ENCODE measurements at regions of chr10 and their contacts with region 1.

Region 1: GRCh38 chr10:119478111-119478802 is 64.3 kb downstream of the RGS10 start:
- DNase-seq: peak; percentile 66
- ATAC-seq: peak; percentile 96
- H3K4me3 Mint-ChIP-seq: peak overlapping the region; percentile 68
- H3K27ac Mint-ChIP-seq: peak overlapping the region; percentile 93
- H3K4me1 Mint-ChIP-seq: peaks cover 40% of the 10 kb centered on the region
- H3K27me3 Mint-ChIP-seq: no peaks in the 10 kb centered on the region
- CTCF ChIP-seq: no peak

Region 2: GRCh38 chr10:119445311-119445934 is 32.8 kb before region 1 on chr10:
- CTCF ChIA-PET with region 1: interaction called, 20 read pairs
- POLR2A ChIA-PET with region 1: interaction called, 18 read pairs
- intact Hi-C with region 1: loop called (anchors 1 kb)
- DNase-seq: peak; percentile 74
- ATAC-seq: peak; percentile 70
- H3K4me3 Mint-ChIP-seq: no peak overlapping the region
- H3K27ac Mint-ChIP-seq: peak overlapping the region; percentile 61
- H3K4me1 Mint-ChIP-seq: peaks cover 31% of the 10 kb centered on the region
- H3K27me3 Mint-ChIP-seq: no peaks in the 10 kb centered on the region
- CTCF ChIP-seq: peak; percentile 57

Region 3: GRCh38 chr10:119455609-119456434 is 22.4 kb before region 1 on chr10:
- CTCF ChIA-PET with region 1: interaction called, 7 read pairs
- POLR2A ChIA-PET with region 1: interaction called, 21 read pairs
- intact Hi-C with region 1: loop called (anchors 1 kb)
- DNase-seq: no peak
- ATAC-seq: peak; percentile 81
- H3K4me3 Mint-ChIP-seq: peak overlapping the region; percentile 75
- H3K27ac Mint-ChIP-seq: peak overlapping the region; percentile 93
- H3K4me1 Mint-ChIP-seq: peaks cover 31% of the 10 kb centered on the region
- H3K27me3 Mint-ChIP-seq: no peaks in the 10 kb centered on the region
- CTCF ChIP-seq: no peak

Region 4: DNA sequence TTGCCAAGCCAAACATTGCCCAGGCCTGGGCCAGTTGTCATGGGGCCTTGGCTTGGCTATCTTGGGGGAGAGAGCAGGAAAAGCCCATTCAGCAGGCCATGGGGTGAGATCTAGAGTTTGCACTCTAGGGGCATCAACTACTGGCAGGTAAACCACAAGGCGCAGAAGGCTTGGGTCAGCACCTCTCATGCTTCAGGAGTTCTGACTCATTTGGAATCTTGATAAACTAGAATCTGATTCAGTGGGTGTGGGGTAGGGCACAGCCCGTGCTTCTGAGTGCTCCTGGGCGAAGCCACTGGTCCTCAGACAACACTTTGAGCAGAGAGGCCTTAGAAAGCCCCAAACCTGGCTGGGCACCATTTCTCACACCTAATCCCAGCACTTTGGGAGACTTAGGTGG is 16.9 kb before region 1 on chr10:
- CTCF ChIA-PET with region 1: interaction called, 7 read pairs
- POLR2A ChIA-PET with region 1: interaction called, 21 read pairs
- intact Hi-C with region 1: loop called (anchors 1 kb)
- DNase-seq: no peak
- ATAC-seq: peak; percentile 92
- H3K4me3 Mint-ChIP-seq: peak overlapping the region; percentile 33
- H3K27ac Mint-ChIP-seq: peak overlapping the region; percentile 78
- H3K4me1 Mint-ChIP-seq: peaks cover 39% of the 10 kb centered on the region
- H3K27me3 Mint-ChIP-seq: peaks cover 7% of the 10 kb centered on the region
- CTCF ChIP-seq: no peak

Region 5: DNA sequence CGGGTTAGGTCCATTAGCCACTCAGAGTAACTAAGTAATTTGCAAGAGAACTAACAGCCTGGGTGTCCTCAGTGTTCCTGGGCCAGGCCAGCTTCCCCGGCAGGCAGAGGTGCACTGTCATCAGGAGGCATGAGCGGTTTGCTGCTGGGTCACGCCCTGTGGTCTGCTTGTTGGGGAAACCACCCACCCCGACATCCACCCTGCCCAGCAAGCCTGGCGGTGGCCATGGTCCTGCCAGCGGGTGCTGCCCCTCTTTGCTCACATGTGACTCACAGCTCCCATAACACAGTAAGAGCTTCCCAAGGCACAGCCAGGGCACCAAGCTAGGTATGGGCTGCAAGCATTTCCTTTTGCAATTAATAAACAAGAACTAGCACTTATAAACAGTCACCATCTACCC is 11.6 kb before region 1 on chr10:
- CTCF ChIA-PET with region 1: interaction called, 4 read pairs
- POLR2A ChIA-PET with region 1: interaction called, 21 read pairs
- intact Hi-C with region 1: loop called (anchors 1 kb)
- DNase-seq: no peak
- ATAC-seq: peak; percentile 28
- H3K4me3 Mint-ChIP-seq: no peak overlapping the region
- H3K27ac Mint-ChIP-seq: no peak overlapping the region
- H3K4me1 Mint-ChIP-seq: peaks cover 28% of the 10 kb centered on the region
- H3K27me3 Mint-ChIP-seq: peaks cover 7% of the 10 kb centered on the region
- CTCF ChIP-seq: no peak

Region 6: DNA sequence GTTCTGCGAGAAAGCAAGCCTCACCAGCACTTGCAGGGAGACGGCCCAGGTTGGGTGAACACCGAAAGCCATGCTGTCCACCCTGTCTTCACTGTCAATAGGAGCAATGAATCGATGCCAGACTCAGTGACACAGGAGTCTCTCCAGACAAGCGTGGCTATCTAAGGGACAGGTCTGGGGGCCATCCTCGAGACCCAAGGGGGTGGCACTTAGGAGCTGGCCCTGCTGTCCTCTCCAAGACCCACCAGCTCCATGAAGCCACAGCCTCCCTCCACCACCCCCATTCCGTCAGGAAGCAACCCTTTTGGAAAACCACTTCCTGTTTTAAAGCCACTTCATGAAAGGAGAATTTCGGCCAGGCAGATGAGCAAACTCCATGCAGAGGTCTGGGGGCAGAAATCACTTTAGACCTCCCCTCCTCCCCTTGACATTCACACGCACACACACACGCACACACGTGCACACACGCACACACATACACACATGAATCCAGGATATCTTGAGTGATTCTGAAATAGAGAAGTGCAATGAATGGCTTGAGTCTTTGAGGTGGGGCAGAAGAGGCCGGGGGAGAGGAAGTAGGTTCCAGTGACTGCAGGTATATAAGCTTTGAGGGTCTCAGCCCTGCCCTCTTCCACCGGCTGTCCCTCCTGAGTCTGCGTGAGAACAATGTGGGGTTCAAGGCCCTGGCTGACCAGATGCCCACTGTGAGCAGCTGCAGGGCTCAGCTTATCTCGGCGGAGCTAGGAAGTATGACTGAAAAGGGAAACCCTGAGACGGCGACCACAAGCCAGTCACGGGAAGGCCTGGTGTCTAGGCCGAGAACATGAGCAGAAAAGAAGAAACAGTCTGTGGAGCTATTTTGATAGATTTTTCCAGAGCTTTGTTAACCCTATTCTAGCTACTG is 39.2 kb after region 1 on chr10:
- CTCF ChIA-PET with region 1: no interaction called
- POLR2A ChIA-PET with region 1: interaction called, 12 read pairs
- intact Hi-C with region 1: loop called (anchors 1 kb)
- DNase-seq: peak; percentile 59
- ATAC-seq: peak; percentile 71
- H3K4me3 Mint-ChIP-seq: peak overlapping the region; percentile 67
- H3K27ac Mint-ChIP-seq: peak overlapping the region; percentile 94
- H3K4me1 Mint-ChIP-seq: peaks cover 34% of the 10 kb centered on the region
- H3K27me3 Mint-ChIP-seq: no peaks in the 10 kb centered on the region
- CTCF ChIP-seq: no peak

Region 7: GRCh38 chr10:119644205-119644814 is 166.1 kb after region 1 on chr10:
- CTCF ChIA-PET with region 1: no interaction called
- POLR2A ChIA-PET with region 1: no interaction called
- intact Hi-C with region 1: no loop called
- DNase-seq: no peak
- ATAC-seq: no peak
- H3K4me3 Mint-ChIP-seq: no peak overlapping the region
- H3K27ac Mint-ChIP-seq: no peak overlapping the region
- H3K4me1 Mint-ChIP-seq: no peaks in the 10 kb centered on the region
- H3K27me3 Mint-ChIP-seq: no peaks in the 10 kb centered on the region
- CTCF ChIP-seq: no peak